ENCODE measurements at regions of chr15 and their contacts with region 1.

Region 1: GRCh38 chr15:63389902-63390670 is 8.4 kb upstream of the CA12 start:
- DNase-seq: no peak
- H3K4me3 ChIP-seq: no peak overlapping the region
- H3K27ac ChIP-seq: no peak overlapping the region
- H3K4me1 ChIP-seq: peaks cover 36% of the 10 kb centered on the region
- H3K27me3 ChIP-seq: no peaks in the 10 kb centered on the region
- CTCF ChIP-seq: no peak
- POLR2A ChIP-seq: no peak

Region 2: GRCh38 chr15:63283126-63283525 is 107.0 kb before region 1 on chr15:
- intact Hi-C with region 1: no loop called
- DNase-seq: no peak
- H3K4me3 ChIP-seq: no peak overlapping the region
- H3K27ac ChIP-seq: no peak overlapping the region
- H3K4me1 ChIP-seq: peaks cover 8% of the 10 kb centered on the region
- H3K27me3 ChIP-seq: no peaks in the 10 kb centered on the region
- CTCF ChIP-seq: no peak
- POLR2A ChIP-seq: no peak

Region 3: DNA sequence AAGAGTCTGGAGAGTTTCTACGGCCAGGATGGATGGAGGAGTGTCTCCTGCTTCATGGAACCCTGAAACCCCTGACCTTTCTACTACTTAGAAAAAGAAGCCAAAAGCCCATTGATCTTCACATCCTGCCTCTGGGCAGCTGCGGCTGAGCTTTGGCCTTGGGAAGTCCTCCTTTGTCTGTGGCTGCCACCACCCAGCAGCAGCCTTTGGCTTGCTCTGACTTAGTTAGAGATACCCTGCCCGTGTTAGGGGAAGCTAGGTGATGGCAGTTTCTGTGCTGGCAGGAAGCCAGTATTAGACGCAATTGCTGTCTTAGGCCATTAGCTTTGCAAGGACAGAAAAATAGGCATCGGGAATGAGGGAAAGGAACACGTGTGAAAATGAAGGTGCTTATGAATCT is 93.9 kb before region 1 on chr15:
- intact Hi-C with region 1: no loop called
- DNase-seq: no peak
- H3K4me3 ChIP-seq: no peak overlapping the region
- H3K27ac ChIP-seq: no peak overlapping the region
- H3K4me1 ChIP-seq: no peaks in the 10 kb centered on the region
- H3K27me3 ChIP-seq: no peaks in the 10 kb centered on the region
- CTCF ChIP-seq: no peak
- POLR2A ChIP-seq: no peak

Region 4: DNA sequence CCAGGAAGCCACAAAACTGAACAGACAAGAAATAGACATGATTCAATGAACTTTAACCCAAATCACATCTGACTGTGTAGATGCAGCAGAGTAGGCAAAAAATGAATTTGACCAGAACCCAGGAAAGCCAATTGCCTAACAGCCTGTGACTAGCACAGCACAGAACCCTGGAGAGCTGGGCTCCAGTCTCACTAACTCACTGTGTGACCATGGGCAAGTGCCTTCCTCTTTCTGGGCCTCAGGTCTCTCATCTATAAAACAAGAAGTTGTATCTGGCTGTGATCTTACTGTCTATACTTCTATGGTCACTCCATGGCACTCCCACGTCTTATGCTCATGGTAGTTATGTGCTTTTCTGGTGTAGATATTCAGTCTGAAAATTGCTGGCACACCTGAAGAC is 66.2 kb after region 1 on chr15:
- intact Hi-C with region 1: no loop called
- DNase-seq: no peak
- H3K4me3 ChIP-seq: no peak overlapping the region
- H3K27ac ChIP-seq: no peak overlapping the region
- H3K4me1 ChIP-seq: peaks cover 4% of the 10 kb centered on the region
- H3K27me3 ChIP-seq: no peaks in the 10 kb centered on the region
- CTCF ChIP-seq: no peak
- POLR2A ChIP-seq: no peak

Region 5: DNA sequence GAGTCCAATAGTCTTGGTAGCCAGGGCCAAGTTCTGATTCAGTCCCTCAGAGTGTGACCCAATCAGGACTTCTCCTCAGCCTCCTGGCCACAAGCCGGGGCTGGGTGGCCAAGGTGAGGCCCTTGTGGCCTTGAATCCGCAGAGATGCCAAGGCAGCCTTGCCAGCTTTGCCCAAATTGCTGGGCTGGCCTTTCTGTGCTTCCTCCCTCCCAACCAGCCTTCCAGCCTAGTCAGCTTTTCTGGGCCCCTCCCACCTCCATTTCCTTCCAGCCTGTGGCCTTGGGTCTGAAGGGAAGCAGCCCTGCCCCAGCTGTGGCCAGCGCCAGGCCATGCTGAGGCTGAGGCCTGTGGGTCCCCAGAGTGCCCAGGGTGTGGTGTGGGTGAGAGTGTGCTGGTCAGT is 1487.3 kb after region 1 on chr15:
- intact Hi-C with region 1: loop called (anchors 5 kb)
- DNase-seq: no peak
- H3K4me3 ChIP-seq: no peak overlapping the region
- H3K27ac ChIP-seq: peak overlapping the region; percentile 25
- H3K4me1 ChIP-seq: peaks cover 27% of the 10 kb centered on the region
- H3K27me3 ChIP-seq: no peaks in the 10 kb centered on the region
- CTCF ChIP-seq: no peak
- POLR2A ChIP-seq: no peak

Measured in vagina (tissue), 2 donors.